H1 (cell line): ENCODE measurements at regions of chr2 and their contacts with region 1.

Region 1: DNA sequence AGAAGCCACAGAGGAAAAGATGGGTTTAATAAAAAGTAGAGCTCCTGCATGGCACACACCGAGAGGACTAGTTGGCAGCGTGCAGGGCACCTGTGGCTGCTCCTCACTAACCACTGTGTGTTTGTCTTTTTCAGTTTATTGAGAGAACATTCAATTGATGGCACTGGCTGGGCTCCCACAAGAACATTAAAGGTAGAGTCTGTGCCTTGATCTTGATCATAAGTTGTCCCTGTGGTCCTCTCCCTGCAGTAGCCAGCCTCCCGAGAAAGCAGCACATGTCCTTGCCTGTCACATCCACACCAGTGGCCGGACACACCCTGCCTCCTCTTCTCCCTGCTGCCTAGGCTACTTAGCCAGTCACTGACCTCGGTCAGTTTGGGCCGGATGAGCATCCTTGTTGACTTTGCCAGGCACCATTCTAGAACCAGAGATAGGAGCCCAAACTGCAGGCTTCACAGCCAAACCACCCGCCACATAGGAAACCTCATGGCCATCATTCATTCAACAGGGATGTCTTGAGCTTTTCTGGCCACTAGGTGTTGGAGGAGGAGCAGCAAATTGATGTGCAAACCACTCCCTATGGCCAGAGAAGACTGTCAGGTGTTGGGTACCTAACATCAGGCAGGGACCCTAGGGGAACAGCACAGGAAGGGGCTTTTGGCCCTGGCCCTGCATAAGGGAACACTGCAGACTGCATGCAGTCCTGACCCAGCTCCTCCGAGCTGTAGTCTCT is 30.2 kb upstream of the SCLY start:
- DNase-seq: no peak
- H3K4me3 ChIP-seq: no peak overlapping the region
- H3K27ac ChIP-seq: no peak overlapping the region
- H3K4me1 ChIP-seq: peaks cover 0 to 12% (median 6%) of the 10 kb centered on the region in 4 experiments; a peak in 6 of 7 replicates
- H3K27me3 ChIP-seq: no peaks in the 10 kb centered on the region
- CTCF ChIP-seq: peak in 1 of 3 experiments; percentile 47; a peak in 1 of 4 replicates
- EP300 ChIP-seq: no peak
- POLR2A ChIP-seq: no peak
- RAD21 ChIP-seq: peak in 1 of 2 experiments; percentile 20; a peak in 1 of 4 replicates

Region 2: GRCh38 chr2:237858294-237859081 is 172.1 kb before region 1 on chr2:
- CTCF ChIA-PET with region 1: interaction called, 10 read pairs
- POLR2A ChIA-PET with region 1: no interaction called
- DNase-seq: peak; percentile 36 to 69
- H3K4me3 ChIP-seq: peak overlapping the region; percentile 24 to 56 (median 44)
- H3K27ac ChIP-seq: no peak overlapping the region
- H3K4me1 ChIP-seq: peaks cover 0 to 10% (median 4%) of the 10 kb centered on the region in 4 experiments; a peak in 6 of 7 replicates
- H3K27me3 ChIP-seq: peaks cover 9 to 32% (median 23%) of the 10 kb centered on the region in 4 experiments
- CTCF ChIP-seq: peak; percentile 89 to 92 (median 92)
- EP300 ChIP-seq: no peak
- POLR2A ChIP-seq: no peak
- RAD21 ChIP-seq: peak; percentile 96 to 97

Region 3: GRCh38 chr2:238067939-238068338 is 37.4 kb after region 1 on chr2:
- CTCF ChIA-PET with region 1: no interaction called
- POLR2A ChIA-PET with region 1: no interaction called
- DNase-seq: no peak
- H3K4me3 ChIP-seq: no peak overlapping the region
- H3K27ac ChIP-seq: no peak overlapping the region
- H3K4me1 ChIP-seq: peaks cover 0 to 3% (median 0%) of the 10 kb centered on the region in 4 experiments; a peak in 2 of 7 replicates
- H3K27me3 ChIP-seq: no peaks in the 10 kb centered on the region
- CTCF ChIP-seq: no peak
- EP300 ChIP-seq: no peak
- POLR2A ChIP-seq: no peak
- RAD21 ChIP-seq: no peak